ENCODE measurements at regions of chr4 and their contacts with region 1.

Region 1: GRCh38 chr4:1740021-1740545 is 18.8 kb downstream of the TACC3 start:
- DNase-seq: no peak
- ATAC-seq: no peak
- H3K4me3 ChIP-seq: no peak overlapping the region
- H3K27ac ChIP-seq: no peak overlapping the region
- H3K4me1 ChIP-seq: no peaks in the 10 kb centered on the region
- H3K27me3 ChIP-seq: no peaks in the 10 kb centered on the region
- CTCF ChIP-seq: no peak
- EP300 ChIP-seq: no peak
- POLR2A ChIP-seq: no peak; the same call in 1 of the 2 replicates
- RAD21 ChIP-seq: no peak

Region 2: DNA sequence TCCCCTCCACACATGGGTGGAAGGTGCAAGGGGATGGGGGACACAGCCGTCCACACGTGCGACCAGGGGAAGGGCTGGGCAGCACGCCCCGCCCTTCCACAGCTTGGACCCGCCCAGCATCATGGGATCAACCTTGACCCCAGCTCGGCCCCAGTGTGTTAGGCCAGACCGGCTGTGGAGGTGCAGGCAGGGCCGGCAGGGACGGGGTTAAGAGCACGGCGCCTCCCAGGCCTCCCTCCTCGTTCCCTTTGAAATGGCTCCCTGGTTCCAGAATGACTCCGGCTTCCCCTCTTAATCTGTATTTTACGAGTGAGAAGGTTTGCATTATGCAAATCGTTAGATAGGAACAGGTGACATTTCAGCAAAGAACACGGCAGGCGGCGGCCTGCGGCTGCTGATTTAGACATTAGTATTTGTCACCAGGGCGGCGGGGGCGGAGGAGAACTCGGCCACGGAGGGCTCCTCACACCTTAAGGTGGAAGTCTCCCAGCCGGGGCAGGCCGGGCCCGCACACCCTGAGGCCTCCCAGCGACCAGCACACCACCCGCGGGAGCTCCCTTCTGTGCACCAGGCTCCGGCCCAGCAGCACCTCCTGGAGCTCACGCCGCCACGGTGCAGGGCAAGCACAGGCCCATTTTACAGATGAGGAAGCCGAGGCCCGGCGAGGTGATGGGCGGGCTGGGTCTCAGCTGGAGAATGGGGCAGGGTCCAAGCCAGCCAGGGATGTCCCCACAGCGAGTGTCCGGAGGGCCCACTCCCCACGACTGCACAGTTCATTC is 172.1 kb before region 1 on chr4:
- CTCF ChIA-PET with region 1: no interaction called
- POLR2A ChIA-PET with region 1: no interaction called
- RAD21 ChIA-PET with region 1: no interaction called
- SMC1A ChIA-PET with region 1: no interaction called
- in situ Hi-C with region 1: no loop called
- intact Hi-C with region 1: no loop called
- DNase-seq: no peak
- ATAC-seq: peak; percentile 70
- H3K4me3 ChIP-seq: no peak overlapping the region
- H3K27ac ChIP-seq: no peak overlapping the region
- H3K4me1 ChIP-seq: no peaks in the 10 kb centered on the region
- H3K27me3 ChIP-seq: no peaks in the 10 kb centered on the region
- CTCF ChIP-seq: peak in 2 of 3 experiments; percentile 3 to 25; a peak in 1 of 6 replicates
- EP300 ChIP-seq: no peak
- POLR2A ChIP-seq: no peak
- RAD21 ChIP-seq: no peak

Region 3: DNA sequence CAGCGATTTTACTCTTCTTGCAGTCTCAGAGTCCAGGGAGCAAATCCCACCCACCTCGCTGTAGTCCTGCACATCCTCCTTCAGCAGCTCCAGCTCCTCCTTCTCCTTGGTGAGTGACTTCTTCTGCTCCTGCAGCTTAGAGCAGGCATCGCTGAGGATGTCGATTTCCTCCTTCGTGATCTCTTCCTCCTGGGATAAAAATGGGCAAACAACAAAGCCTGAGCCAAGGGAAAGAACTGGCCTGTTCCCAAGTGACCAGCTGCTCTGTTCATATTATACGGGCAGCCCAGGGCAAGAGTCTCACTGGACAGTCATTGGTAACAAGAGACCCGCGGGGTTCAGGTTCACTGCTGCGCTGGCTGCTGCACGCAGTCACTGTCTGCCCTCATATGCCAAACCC is 79.2 kb after region 1 on chr4:
- CTCF ChIA-PET with region 1: no interaction called
- POLR2A ChIA-PET with region 1: no interaction called
- RAD21 ChIA-PET with region 1: no interaction called
- SMC1A ChIA-PET with region 1: no interaction called
- in situ Hi-C with region 1: loop called (anchors 5 kb)
- intact Hi-C with region 1: no loop called
- DNase-seq: no peak
- ATAC-seq: no peak
- H3K4me3 ChIP-seq: no peak overlapping the region
- H3K27ac ChIP-seq: no peak overlapping the region
- H3K4me1 ChIP-seq: no peaks in the 10 kb centered on the region
- H3K27me3 ChIP-seq: no peaks in the 10 kb centered on the region
- CTCF ChIP-seq: no peak
- EP300 ChIP-seq: no peak
- POLR2A ChIP-seq: no peak
- RAD21 ChIP-seq: no peak

Region 4: GRCh38 chr4:1910643-1911042 is 170.6 kb after region 1 on chr4:
- CTCF ChIA-PET with region 1: interaction called, 3 read pairs
- POLR2A ChIA-PET with region 1: no interaction called
- RAD21 ChIA-PET with region 1: no interaction called
- SMC1A ChIA-PET with region 1: no interaction called
- in situ Hi-C with region 1: loop called (anchors 5 kb)
- intact Hi-C with region 1: no loop called
- DNase-seq: no peak
- ATAC-seq: peak; percentile 53; the same call in 2 of the 3 replicates
- H3K4me3 ChIP-seq: no peak overlapping the region
- H3K27ac ChIP-seq: no peak overlapping the region
- H3K4me1 ChIP-seq: no peaks in the 10 kb centered on the region
- H3K27me3 ChIP-seq: no peaks in the 10 kb centered on the region
- CTCF ChIP-seq: peak; percentile 44 to 54 (median 53); a peak in 5 of 6 replicates
- EP300 ChIP-seq: no peak
- POLR2A ChIP-seq: no peak
- RAD21 ChIP-seq: peak; percentile 64